A673 (cell line): ENCODE measurements at regions of chr18 and their contacts with region 1.

Region 1: DNA sequence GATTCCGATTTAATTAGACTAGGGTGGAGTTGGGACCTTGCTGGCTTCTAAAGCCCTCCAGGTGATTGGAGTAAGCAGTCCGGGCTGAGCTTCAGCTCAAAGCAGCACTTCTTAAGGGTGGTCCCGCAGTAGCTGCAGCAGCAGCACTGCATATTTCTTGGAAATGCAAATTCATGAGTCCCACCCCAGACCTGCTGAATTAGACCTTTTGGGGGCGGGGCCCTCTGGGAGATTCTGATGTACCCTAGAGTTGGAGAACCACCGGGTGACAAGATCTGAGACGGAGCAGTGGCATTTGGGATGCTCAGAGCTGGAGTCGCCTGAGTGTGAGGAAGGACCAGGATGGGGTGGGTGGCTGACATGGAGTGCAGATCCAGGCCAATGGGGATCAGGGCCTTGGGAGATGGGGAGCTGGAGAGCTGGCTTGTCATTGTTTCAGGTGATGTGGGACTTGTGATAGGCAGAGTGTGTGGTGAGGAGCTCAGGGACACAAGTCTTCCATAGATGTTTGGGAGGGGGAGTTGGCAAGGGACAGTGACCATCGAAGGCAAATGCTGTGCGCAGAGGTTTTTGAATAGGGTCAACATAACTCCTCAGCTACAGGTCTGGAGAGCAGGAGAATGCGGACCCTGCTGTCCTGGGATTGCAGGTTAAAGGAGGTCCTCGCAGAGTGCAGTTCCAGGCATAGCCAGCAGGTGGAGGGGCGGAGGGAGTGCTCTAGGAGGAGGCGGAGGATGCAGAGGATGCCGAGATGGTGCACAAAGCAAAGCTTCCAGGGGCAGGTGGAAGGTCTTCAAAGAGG is 130.9 kb upstream of the RAB12 start:
- DNase-seq: peak; percentile 70
- H3K4me3 ChIP-seq: no peak overlapping the region
- H3K27ac ChIP-seq: no peak overlapping the region
- H3K4me1 ChIP-seq: no peaks in the 10 kb centered on the region
- H3K27me3 ChIP-seq: peaks cover 56% of the 10 kb centered on the region
- CTCF ChIP-seq: peak; percentile 84

Region 2: DNA sequence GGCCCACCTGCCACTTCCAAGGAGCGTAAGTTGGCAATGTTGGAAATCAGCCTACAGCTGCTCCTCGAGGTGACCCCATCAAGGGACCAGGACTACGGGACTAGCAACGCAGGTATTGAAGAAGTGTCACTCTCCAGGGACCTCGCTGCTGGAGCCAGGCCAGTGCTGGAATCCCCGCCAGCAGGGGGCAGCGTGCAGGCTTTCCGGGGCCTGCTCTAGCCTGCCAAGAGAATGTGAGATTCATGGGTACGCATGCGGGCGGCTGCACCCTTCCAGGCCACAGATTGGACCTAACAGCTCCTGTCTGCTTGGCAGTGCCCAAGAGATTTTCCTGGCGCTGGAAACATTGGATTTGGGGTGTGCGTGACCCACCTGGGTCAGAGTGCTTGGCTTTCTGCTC is 52.0 kb before region 1 on chr18:
- CTCF ChIA-PET with region 1: no interaction called
- POLR2A ChIA-PET with region 1: no interaction called
- intact Hi-C with region 1: loop called (anchors 10 kb)
- DNase-seq: no peak
- H3K4me3 ChIP-seq: no peak overlapping the region
- H3K27ac ChIP-seq: no peak overlapping the region
- H3K4me1 ChIP-seq: no peaks in the 10 kb centered on the region
- H3K27me3 ChIP-seq: peaks cover 4% of the 10 kb centered on the region
- CTCF ChIP-seq: peak; percentile 46; the same call in 1 of the 2 replicates